ENCODE measurements at regions of chr1 and their contacts with region 1.

Region 1: GRCh38 chr1:234309598-234310459 is 63.4 kb upstream of the COA6 start:
- DNase-seq: peak; percentile 84
- CTCF ChIP-seq: peak; percentile 95

Region 2: DNA sequence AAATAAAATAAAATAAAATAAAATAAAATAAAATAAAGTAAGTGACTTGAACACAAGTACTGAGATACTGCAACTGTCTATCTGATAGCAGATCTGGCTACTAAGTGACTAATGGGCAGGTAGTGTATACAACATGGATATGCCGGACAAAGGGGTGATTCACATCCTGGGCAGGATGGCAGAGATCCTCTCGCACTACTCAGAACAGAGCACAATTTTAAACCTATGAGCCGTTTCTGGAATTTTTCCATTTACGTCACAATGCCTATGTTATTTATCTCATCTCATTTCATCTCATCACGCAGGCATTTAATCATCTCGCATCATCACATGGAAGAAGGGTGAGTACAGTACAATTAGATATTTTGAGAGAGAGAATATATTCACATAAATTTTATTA is 169.9 kb before region 1 on chr1:
- in situ Hi-C with region 1: loop called (anchors 10 kb)
- DNase-seq: no peak
- CTCF ChIP-seq: no peak

Measured in GM13977 (cell line).